ENCODE measurements at regions of chr20 and their contacts with region 1.

Region 1: DNA sequence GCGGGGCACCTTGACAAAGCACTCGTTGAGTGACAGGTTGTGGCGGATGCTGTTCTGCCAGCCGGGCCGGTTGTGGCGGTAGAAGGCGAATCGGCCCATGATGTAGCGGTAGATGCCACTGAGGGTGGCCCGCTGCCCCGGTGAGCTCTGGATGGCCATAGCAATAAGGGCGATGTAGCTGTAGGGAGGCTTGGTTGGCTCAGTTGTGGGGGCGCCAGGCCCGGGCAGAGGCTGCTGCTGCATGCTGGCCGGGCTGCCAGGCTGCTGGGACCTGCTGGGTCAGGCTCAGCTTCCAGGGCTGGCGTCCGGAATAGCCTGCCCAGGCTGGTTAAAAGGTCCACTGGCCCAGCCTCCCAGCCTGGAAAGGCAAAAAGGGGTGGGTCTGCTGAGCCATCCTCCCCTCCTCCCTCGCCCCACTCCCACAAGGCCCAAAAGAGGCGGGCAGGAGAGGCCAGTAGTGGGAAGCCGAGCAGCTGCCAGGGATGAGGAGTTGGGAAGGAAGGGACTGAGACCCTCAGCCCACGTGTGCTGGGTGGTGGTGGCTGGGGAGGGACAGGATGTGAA is at the start of gene FOXS1:
- DNase-seq: no peak
- ATAC-seq: no peak
- H3K4me3 Mint-ChIP-seq: no peak within 1 kb of the TSS
- H3K27ac Mint-ChIP-seq: no peak within 1 kb of the TSS
- H3K4me1 Mint-ChIP-seq: no peaks in the 10 kb centered on the region
- H3K27me3 Mint-ChIP-seq: peaks cover 9% of the 10 kb centered on the region
- CTCF ChIP-seq: no peak
- total RNA-seq, gene FOXS1: not detected

Region 2: GRCh38 chr20:31856516-31856915 is 11.1 kb after region 1 on chr20:
- CTCF ChIA-PET with region 1: interaction called, 17 read pairs
- POLR2A ChIA-PET with region 1: no interaction called
- intact Hi-C with region 1: no loop called
- DNase-seq: no peak
- ATAC-seq: no peak
- H3K4me3 Mint-ChIP-seq: no peak overlapping the region
- H3K27ac Mint-ChIP-seq: no peak overlapping the region
- H3K4me1 Mint-ChIP-seq: peaks cover 4% of the 10 kb centered on the region
- H3K27me3 Mint-ChIP-seq: peaks cover 22% of the 10 kb centered on the region
- CTCF ChIP-seq: no peak

Region 3: DNA sequence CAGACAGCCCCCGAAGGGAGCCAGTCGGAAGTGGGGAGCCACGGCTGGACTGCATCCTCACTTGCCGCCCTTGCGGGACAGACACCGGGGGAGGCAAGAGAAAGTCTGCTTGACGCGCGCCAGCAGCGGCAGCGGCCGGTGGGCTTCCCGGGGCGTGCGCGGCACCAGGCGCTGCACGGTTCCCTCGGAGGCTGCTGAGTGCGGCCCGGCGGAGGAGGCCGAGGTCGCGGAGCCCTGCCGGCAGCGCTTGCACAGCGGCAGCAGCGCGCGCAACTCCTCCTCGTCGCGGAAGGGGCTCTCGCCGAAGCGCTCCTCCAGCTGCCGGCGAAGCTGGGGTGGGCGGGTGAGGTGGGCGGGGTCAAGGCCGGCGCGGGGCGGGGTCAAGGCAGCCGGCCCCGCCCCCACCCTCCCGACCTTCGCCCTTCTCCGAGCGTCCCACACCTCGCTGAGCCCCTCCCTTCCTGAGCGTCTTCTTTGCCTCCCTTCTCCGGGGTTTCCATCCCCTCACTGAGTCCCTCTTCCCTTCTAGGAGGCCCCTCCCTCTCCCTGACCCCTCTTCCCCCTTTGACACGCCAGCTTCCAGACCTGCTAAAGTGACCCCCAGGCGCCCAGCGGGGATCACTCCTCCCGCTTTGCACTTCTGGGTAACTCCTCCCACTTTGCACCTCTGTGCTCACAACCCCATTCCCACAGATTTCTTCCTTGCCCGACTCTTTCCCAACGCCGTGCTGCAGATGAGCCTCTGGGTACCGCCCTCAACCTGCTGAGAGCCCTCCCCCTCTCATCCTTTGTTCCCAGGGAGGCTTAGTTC is 16.2 kb after region 1 on chr20:
- CTCF ChIA-PET with region 1: interaction called, 17 read pairs
- POLR2A ChIA-PET with region 1: no interaction called
- intact Hi-C with region 1: no loop called
- DNase-seq: peak; percentile 78
- ATAC-seq: peak; percentile 97
- H3K4me3 Mint-ChIP-seq: peak overlapping the region; percentile 33
- H3K27ac Mint-ChIP-seq: no peak overlapping the region
- H3K4me1 Mint-ChIP-seq: peaks cover 4% of the 10 kb centered on the region
- H3K27me3 Mint-ChIP-seq: peaks cover 24% of the 10 kb centered on the region
- CTCF ChIP-seq: no peak